Activated naive CD4-positive, alpha-beta T cell treated with anti-CD3 and anti-CD28 coated beads for 36 hours (primary cell): ENCODE measurements at regions of chr7 and their contacts with region 1.

Region 1: GRCh38 chr7:121547544-121548092 is 151.5 kb upstream of the FAM3C start:
- DNase-seq: no peak
- H3K4me3 Mint-ChIP-seq: no peak overlapping the region
- H3K27ac Mint-ChIP-seq: no peak overlapping the region
- H3K4me1 Mint-ChIP-seq: peaks cover 29% of the 10 kb centered on the region
- H3K27me3 Mint-ChIP-seq: no peaks in the 10 kb centered on the region

Region 2: DNA sequence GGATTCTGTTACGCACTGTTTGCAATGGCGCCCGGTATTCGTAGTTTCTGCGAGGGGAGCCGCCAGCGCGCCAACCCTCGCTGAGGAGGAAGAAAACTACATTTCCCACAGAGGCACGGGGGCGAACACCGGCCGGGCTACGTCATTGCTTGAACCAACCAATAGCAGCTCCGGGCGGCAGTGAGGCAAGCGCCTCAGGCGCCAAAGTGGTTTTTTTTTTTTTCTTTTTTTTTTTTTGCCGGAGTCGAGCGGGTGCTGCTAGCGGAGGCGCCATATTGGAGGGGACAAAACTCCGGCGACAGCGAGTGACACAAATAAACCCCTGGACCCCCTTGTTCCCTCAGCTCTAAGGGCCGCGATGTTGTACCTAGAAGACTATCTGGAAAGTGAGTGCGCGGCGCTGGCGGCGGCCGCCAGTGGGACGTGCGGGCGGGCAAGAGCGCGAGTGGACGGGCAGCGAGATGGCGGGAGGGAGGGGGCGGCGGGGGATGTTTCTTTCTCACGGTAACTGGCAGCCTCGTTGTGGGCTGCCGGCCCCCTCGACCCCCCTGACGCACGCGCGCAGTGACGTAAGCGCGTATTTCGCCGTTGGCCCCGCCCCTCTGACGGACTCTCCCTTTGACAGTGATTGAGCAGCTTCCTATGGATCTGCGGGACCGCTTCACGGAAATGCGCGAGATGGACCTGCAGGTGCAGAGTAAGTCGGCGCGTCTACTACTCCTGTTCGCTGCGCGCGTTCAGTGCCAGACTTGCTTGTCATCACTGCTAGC is 596.9 kb before region 1 on chr7 and contains the start of gene ING3:
- CTCF ChIA-PET with region 1: no interaction called
- intact Hi-C with region 1: loop called (anchors 1 kb)
- DNase-seq: peak; percentile 97
- H3K4me3 Mint-ChIP-seq: peak within 1 kb of the TSS; percentile 97
- H3K27ac Mint-ChIP-seq: peak within 1 kb of the TSS; percentile 97
- H3K4me1 Mint-ChIP-seq: peaks cover 17% of the 10 kb centered on the region
- H3K27me3 Mint-ChIP-seq: peaks cover 3% of the 10 kb centered on the region
- total RNA-seq, gene ING3: 25.0 to 26.7 TPM

Region 3: GRCh38 chr7:121126801-121127534 is 420.6 kb before region 1 on chr7:
- CTCF ChIA-PET with region 1: interaction called, 4 read pairs
- intact Hi-C with region 1: loop called (anchors 1 kb)
- DNase-seq: no peak
- H3K4me3 Mint-ChIP-seq: no peak overlapping the region
- H3K27ac Mint-ChIP-seq: no peak overlapping the region
- H3K4me1 Mint-ChIP-seq: no peaks in the 10 kb centered on the region
- H3K27me3 Mint-ChIP-seq: peaks cover 8% of the 10 kb centered on the region

Region 4: DNA sequence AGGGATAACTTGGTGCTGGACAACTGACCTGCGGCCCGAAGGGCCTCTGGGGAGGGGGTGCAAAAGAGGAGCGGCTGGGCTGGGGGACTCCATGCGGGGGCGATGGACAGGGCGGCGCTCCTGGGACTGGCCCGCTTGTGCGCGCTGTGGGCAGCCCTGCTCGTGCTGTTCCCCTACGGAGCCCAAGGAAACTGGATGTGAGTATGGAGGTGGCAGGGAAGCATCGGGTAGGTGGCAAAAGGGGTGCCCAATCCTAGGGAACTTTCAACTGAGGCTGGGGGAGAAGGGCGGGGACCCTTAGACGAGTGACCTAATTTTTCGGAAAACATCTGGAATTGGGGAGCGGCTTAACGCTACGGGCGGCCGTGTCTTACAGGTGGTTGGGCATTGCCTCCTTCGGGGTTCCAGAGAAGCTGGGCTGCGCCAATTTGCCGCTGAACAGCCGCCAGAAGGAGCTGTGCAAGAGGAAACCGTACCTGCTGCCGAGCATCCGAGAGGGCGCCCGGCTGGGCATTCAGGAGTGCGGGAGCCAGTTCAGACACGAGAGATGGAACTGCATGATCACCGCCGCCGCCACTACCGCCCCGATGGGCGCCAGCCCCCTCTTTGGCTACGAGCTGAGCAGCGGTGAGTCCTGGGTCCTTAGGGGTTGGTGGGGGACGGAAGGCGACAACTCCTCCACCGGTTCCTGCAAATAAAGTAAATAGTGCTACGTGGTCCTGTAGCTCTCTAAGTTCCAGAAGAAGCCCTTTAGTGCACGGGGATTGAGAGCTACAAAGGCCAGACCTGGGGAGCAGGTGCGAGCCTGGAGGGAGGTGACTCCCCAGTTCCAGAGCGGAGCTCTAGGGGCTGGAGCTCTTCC is 218.2 kb before region 1 on chr7:
- CTCF ChIA-PET with region 1: interaction called, 4 read pairs
- intact Hi-C with region 1: loop called (anchors 1 kb)
- DNase-seq: peak; percentile 38
- H3K4me3 Mint-ChIP-seq: peak overlapping the region; percentile 21
- H3K27ac Mint-ChIP-seq: no peak overlapping the region
- H3K4me1 Mint-ChIP-seq: peaks cover 19% of the 10 kb centered on the region
- H3K27me3 Mint-ChIP-seq: peaks cover 56% of the 10 kb centered on the region

Region 5: GRCh38 chr7:121395961-121396757 is 151.5 kb before region 1 on chr7 and contains the start of gene FAM3C:
- CTCF ChIA-PET with region 1: interaction called, 12 read pairs
- intact Hi-C with region 1: loop called (anchors 1 kb)
- DNase-seq: peak; percentile 85
- H3K4me3 Mint-ChIP-seq: peak within 1 kb of the TSS; percentile 82
- H3K27ac Mint-ChIP-seq: peak within 1 kb of the TSS; percentile 88
- H3K4me1 Mint-ChIP-seq: peaks cover 33% of the 10 kb centered on the region
- H3K27me3 Mint-ChIP-seq: no peaks in the 10 kb centered on the region
- total RNA-seq, gene FAM3C: 11.5 to 13.9 TPM

Region 6: DNA sequence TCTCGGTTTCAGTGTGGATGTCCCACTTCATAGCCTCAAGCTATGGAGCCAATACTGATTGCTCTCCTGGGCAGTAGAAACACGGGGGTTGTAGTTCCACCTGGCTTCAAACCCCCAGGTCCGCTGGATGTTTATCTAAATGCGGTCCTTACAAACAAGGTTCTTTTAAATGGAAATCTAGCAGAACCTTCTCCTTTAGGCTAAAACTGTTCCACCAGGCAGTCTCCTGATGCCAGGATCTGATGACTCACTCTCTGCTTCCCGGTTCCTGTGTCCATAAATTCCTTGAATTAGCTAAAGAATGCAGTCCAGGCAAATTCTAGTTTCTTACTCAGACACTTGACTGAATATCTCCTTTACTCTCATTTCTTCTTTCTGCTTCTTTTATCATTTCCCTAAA is 43.1 kb before region 1 on chr7:
- CTCF ChIA-PET with region 1: no interaction called
- intact Hi-C with region 1: loop called (anchors 1 kb)
- DNase-seq: no peak
- H3K4me3 Mint-ChIP-seq: no peak overlapping the region
- H3K27ac Mint-ChIP-seq: no peak overlapping the region
- H3K4me1 Mint-ChIP-seq: peaks cover 14% of the 10 kb centered on the region
- H3K27me3 Mint-ChIP-seq: peaks cover 7% of the 10 kb centered on the region

Region 7: DNA sequence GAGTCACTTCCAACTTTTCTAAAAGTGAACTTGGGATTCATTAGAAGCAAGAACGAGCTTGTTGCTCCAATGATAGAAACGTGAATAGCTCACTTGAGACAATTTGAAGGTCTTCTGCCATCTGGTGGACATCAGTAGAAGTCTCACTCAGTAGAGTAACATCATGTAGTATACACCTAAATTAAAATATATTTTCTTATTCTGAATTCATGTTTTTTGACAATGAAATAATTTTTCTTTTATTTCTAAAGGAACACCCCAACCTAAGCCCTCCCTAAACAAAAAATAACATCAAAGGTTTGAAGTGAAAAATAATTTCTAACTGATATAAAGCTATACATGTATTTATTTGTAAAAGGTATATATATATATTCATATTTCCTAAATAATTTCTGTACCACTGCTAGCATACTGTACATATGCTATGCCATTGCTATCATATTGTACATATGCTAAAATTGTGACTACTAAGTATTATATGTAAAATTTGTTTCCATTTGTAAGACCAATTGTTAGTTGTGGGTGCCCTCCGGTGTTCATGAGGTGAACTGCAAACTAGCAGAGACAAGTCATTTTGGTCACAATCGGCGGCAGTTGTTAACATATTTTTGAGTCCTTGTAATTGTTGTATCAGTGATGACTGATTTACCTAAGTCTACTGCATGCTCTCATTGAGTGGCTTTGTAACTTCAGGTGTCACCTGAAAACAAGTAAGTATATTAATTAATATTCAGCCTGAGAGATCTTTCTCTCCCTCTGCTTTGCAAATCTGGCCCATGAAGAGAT is 447.2 kb after region 1 on chr7:
- CTCF ChIA-PET with region 1: interaction called, 3 read pairs
- intact Hi-C with region 1: loop called (anchors 1 kb)
- DNase-seq: peak; percentile 64
- H3K4me3 Mint-ChIP-seq: no peak overlapping the region
- H3K27ac Mint-ChIP-seq: no peak overlapping the region
- H3K4me1 Mint-ChIP-seq: no peaks in the 10 kb centered on the region
- H3K27me3 Mint-ChIP-seq: no peaks in the 10 kb centered on the region